ENCODE measurements at regions of chr13 and their contacts with region 1.

Region 1: GRCh38 chr13:42985312-42986175 is 6.5 kb downstream of the EPSTI1 start:
- DNase-seq: no peak
- ATAC-seq: peak; percentile 93

Region 2: GRCh38 chr13:41193919-41194824 is 1791.4 kb before region 1 on chr13 and contains the start of gene KBTBD7:
- intact Hi-C with region 1: loop called (anchors 10 kb)
- DNase-seq: peak; percentile 94
- ATAC-seq: peak; percentile 99
- total RNA-seq, gene KBTBD7: 8.5 TPM